ENCODE measurements at regions of chr6 and their contacts with region 1.

Region 1: DNA sequence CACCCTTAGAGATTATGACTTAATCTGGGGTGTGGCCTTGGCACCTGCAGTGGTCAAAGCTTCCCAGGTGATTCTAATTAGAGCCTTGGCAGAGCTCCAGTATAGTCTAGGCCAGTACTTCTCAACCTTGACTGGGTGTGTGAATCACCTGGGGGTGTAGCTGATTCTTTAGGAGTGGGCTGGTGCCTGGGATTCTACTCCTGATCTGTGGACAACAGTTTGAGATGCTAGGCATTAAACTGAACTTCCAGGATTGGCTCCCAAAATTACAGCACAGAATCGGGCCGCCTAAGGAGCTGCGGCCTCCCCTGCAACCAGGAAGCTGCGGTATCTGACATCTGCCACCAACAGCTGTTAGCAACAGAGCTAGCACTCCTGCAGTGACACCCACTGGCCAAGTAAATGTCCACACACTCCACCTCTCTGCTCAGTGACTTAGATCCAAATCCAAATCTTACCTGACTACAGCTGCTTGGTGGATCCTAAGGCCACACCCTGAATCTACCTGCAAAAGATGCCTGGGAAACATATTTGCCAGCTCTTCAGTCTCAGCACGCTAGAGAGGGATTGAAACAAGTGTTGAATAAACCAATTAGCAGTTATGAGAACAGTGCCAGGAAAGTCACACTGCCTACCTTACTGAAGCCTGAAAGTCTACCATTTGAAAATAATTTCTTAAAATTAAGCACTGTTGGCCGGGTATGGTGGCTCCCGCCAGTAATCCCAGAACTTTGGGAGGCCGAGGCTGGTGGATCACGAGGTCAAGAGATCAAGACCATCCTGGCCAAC is 126.7 kb downstream of the UNC5CL start:
- DNase-seq: peak; percentile 75
- ATAC-seq: peak; percentile 98
- H3K4me3 ChIP-seq: no peak overlapping the region
- H3K27ac ChIP-seq: no peak overlapping the region
- H3K4me1 ChIP-seq: peaks cover 46% of the 10 kb centered on the region
- H3K27me3 ChIP-seq: no peaks in the 10 kb centered on the region
- CTCF ChIP-seq: peak; percentile 98
- EP300 ChIP-seq: no peak
- POLR2A ChIP-seq: no peak
- RAD21 ChIP-seq: peak; percentile 86

Region 2: DNA sequence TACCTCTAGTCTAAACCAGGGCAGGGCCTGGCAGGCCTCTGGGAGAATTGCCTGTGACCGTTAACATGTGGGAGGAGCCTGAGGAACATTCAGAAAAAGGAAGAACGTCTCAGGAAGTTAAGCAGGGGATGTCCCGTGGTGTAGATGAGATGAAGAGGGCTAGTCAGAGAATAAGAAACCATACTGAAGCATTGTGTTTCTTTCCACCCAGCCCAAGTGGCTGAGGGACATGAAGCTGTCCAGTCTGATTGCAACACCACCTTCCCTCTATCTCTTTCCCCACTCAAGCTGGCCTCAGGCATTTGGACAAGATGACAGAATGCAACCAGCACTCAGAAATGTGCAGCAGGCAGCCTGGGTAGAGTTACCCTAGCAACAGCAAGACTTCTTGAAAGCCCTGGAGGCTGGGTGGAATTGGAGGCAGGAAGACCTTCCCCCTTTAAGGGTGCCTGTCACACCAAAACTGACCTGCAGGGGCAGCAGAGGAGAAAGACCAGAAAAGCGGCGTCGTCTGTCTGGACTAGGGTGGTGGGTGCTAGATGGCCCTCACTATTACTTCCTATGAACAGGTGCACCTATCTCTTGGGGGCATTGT is 59.5 kb before region 1 on chr6:
- CTCF ChIA-PET with region 1: interaction called, 3 read pairs
- POLR2A ChIA-PET with region 1: no interaction called
- in situ Hi-C with region 1: no loop called
- intact Hi-C with region 1: loop called (anchors 2 kb)
- DNase-seq: peak; percentile 26
- ATAC-seq: peak; percentile 87
- H3K4me3 ChIP-seq: no peak overlapping the region
- H3K27ac ChIP-seq: no peak overlapping the region
- H3K4me1 ChIP-seq: no peaks in the 10 kb centered on the region
- H3K27me3 ChIP-seq: peaks cover 0 to 9% of the 10 kb centered on the region in 2 experiments; a peak in 2 of 5 replicates
- CTCF ChIP-seq: peak; percentile 61
- EP300 ChIP-seq: no peak
- POLR2A ChIP-seq: no peak
- RAD21 ChIP-seq: no peak

Region 3: DNA sequence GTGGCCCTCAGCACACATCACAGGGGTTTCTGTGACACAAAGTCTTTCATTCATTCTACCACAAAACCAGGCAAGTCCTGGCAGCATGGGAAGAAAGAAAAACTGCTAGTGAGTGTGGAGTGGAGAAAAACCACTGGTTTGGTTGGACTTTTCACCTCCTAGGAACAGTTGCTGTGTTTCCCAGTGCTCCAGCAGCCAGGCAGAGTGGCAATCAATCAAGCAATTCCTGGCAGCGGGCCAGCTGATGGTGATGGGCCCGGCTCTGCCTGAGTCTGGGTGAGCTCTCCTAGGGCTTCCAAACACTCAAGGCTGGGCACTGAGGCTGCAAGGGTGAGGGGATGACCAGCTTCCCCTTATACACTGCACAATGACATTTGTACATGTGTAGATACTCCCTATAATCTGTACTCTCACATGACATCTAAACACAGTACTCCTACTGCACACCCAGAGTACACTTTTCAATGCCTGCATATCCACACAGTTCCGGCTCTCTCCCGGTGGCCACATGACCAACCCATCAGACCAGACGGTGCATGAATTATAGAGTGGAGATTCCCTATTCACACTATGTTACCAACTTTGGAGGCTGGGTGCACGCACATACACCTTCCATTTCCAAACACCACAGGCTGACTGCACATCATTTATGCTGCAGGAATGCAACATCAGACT is 29.9 kb before region 1 on chr6:
- CTCF ChIA-PET with region 1: no interaction called
- POLR2A ChIA-PET with region 1: no interaction called
- in situ Hi-C with region 1: no loop called
- intact Hi-C with region 1: no loop called
- DNase-seq: no peak
- ATAC-seq: peak; percentile 39
- H3K4me3 ChIP-seq: no peak overlapping the region
- H3K27ac ChIP-seq: no peak overlapping the region
- H3K4me1 ChIP-seq: peaks cover 26% of the 10 kb centered on the region
- H3K27me3 ChIP-seq: peaks cover 0 to 12% of the 10 kb centered on the region in 2 experiments; a peak in 3 of 5 replicates
- CTCF ChIP-seq: no peak
- EP300 ChIP-seq: no peak
- POLR2A ChIP-seq: no peak
- RAD21 ChIP-seq: no peak